ENCODE measurements at regions of chr17 and their contacts with region 1.

Region 1: GRCh38 chr17:10844621-10845387 is 6.9 kb upstream of the PIRT start:
- DNase-seq: peak; percentile 34 to 79 (median 59)
- ATAC-seq: peak; percentile 89 to 99 (median 90)
- H3K4me3 ChIP-seq: peak overlapping the region; percentile 30 to 49
- H3K4me3 Mint-ChIP-seq: peak overlapping the region; percentile 54 to 84 (median 76)
- H3K27ac ChIP-seq: no peak overlapping the region
- H3K27ac Mint-ChIP-seq: no peak overlapping the region
- H3K4me1 ChIP-seq: peaks cover 0 to 8% of the 10 kb centered on the region in 2 experiments
- H3K4me1 Mint-ChIP-seq: peaks cover 6 to 12% (median 10%) of the 10 kb centered on the region in 3 donors
- H3K27me3 ChIP-seq: peaks cover 0 to 15% of the 10 kb centered on the region in 2 experiments
- H3K27me3 Mint-ChIP-seq: peaks cover 7 to 9% of the 10 kb centered on the region in 2 donors

Region 2: DNA sequence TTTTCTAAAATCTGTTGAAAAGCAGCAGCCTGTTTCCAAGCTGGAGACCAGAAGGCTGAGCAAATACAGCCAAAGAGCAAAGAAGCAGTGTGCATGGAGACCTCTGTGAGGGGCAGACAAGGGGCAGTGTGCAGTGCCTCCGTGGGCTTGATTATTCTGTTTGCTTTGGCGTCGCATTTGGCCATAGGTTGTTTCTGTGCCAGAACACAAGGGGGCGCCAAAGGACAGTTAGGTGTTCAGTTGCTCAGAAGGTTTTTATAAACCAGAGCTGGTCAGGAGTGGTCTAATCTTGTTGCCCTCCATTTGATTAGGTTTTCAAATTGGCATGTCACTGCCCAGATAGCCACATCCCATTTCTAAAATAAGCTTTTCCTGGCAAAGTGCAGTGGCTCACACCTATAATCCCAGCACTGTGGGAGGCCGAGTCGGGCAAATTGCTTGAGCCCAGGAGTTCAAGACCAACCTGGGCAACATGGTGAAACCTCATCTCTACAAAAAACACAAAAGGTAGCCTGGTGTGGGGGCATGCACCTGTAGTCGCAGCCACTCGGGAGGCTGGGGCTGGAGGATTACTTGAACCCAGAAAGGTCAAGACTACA is 198.3 kb before region 1 on chr17:
- CTCF ChIA-PET with region 1: interaction called, 15 to 35 read pairs
- POLR2A ChIA-PET with region 1: no interaction called
- DNase-seq: peak; percentile 33 to 84 (median 62)
- ATAC-seq: peak; percentile 43 to 76 (median 68)
- H3K4me3 ChIP-seq: no peak overlapping the region
- H3K4me3 Mint-ChIP-seq: no peak overlapping the region
- H3K27ac ChIP-seq: no peak overlapping the region
- H3K27ac Mint-ChIP-seq: no peak overlapping the region
- H3K4me1 ChIP-seq: peaks cover 0 to 2% of the 10 kb centered on the region in 2 experiments
- H3K4me1 Mint-ChIP-seq: peaks cover 0 to 4% (median 0%) of the 10 kb centered on the region in 3 donors
- H3K27me3 ChIP-seq: no peaks in the 10 kb centered on the region
- H3K27me3 Mint-ChIP-seq: no peaks in the 10 kb centered on the region

Measured in T-cell (primary cell).